HAP-1 (cell line): ENCODE measurements at regions of chr7 and their contacts with region 1.

Region 1: GRCh38 chr7:150988230-150989226 is 2.3 kb upstream of the NOS3 start:
- DNase-seq: peak; percentile 49 to 89
- H3K4me3 ChIP-seq: 0 out of 2 replicates have a peak overlapping the region, but pooled peaks have one; percentile 7
- H3K4me1 ChIP-seq: no peaks in the 10 kb centered on the region
- H3K27me3 ChIP-seq: peaks cover 10% of the 10 kb centered on the region

Region 2: DNA sequence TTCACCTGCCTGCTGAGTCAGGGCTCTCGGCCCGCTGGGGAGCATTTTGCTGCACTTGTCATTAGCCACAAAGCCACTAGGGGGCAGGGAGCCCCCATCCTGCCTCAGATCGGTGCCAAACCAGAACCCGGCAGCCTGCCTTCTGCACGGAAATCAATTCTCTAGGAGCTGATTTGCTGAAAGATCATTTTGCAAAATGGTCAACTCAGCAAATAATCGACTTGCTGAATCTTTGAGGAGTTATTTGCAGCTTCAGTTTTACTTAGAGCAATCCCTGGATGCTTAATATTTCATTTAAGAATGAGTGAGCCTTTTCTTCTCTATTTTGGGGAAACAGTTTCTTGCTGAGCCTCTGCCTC is 539.8 kb before region 1 on chr7:
- in situ Hi-C with region 1: loop called (anchors 10 kb)
- DNase-seq: peak; percentile 29 to 77
- H3K4me3 ChIP-seq: no peak overlapping the region
- H3K4me1 ChIP-seq: no peaks in the 10 kb centered on the region
- H3K27me3 ChIP-seq: peaks cover 21% of the 10 kb centered on the region

Region 3: DNA sequence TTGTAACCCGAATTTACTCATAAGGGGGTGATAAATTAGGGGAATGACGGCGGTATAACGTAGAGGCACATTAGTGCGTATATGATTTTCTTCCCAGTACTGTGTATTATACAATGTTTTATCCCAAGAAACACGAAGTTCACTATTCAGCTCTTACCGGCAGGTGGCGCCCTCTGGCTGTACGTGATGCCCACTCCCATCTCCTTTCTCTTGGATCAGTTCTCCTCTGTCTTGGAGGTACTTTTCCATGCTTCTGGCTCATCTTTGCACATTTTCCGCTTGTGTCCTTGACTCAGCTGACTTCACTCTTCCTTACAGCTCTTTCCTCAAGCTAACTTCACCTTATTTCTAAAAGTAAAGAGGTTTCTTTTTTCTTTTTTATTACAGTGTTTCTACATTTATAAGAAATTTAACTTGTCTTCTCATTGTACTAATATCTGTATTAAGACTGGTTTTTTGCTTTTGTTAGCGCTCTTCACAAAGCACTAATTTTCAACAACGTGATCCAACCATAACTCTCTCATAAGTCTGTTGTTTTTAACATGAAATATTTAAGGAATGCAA is 209.7 kb before region 1 on chr7:
- in situ Hi-C with region 1: loop called (anchors 5 kb)
- DNase-seq: peak; percentile 71 to 87
- H3K4me3 ChIP-seq: no peak overlapping the region
- H3K4me1 ChIP-seq: no peaks in the 10 kb centered on the region
- H3K27me3 ChIP-seq: 0 out of 2 replicates have a peak, but pooled peaks cover 3% of the 10 kb centered on the region

Region 4: GRCh38 chr7:150903606-150904005 is 84.9 kb before region 1 on chr7:
- in situ Hi-C with region 1: loop called (anchors 5 kb)
- DNase-seq: no peak
- H3K4me3 ChIP-seq: no peak overlapping the region
- H3K4me1 ChIP-seq: peaks cover 5% of the 10 kb centered on the region
- H3K27me3 ChIP-seq: no peaks in the 10 kb centered on the region; the same call in 1 of the 2 replicates

Region 5: GRCh38 chr7:150941981-150942590 is 46.4 kb before region 1 on chr7:
- in situ Hi-C with region 1: no loop called
- DNase-seq: no peak
- H3K4me3 ChIP-seq: no peak overlapping the region
- H3K4me1 ChIP-seq: no peaks in the 10 kb centered on the region
- H3K27me3 ChIP-seq: peaks cover 9% of the 10 kb centered on the region